ENCODE measurements at regions of chr1 and their contacts with region 1.

Region 1: DNA sequence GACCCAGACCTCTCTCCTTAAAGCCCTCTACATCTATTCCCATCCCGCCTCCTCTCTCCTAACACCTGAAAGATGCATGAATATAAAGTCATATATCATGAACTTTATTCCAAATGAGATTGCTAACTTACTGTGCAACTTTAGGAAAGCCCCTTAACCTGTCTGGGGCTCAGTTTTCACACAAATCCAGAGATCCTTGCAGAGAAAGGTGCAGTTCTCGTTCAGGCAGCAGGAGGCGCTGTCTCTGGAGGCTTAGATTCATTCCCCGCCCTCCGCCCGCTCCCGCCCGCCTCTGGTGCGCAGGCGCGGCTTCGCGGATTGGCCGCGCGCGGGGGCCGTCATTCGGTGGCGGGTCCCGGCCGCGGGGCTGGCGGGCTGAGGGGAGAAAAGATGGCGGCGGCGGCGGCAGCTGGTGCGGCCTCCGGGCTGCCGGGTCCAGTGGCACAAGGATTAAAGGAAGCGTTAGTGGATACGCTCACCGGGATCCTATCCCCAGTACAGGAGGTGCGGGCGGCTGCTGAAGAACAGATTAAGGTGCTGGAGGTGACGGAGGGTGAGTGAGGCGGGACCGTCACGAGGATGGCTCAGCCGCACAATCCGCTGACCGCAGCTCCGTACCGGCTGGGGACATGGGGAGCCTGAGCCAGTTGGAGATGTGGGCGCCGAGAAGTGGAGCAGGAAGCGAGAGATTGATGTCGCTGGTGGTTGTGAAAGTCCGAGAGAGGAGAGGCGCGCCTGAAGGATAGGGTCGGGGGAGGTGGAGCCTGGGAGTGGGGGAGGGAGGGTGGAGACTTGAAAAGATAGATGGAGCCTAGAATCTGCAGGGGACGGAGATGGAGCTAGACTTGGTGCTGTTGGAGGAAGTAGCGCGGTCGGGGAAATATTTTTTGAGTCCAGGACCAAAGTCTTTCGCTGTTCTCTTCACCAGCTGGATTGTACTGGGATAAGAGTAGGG is at the start of gene IPO9:
- DNase-seq: peak; percentile 89 to 91 (median 90)
- H3K4me3 ChIP-seq: peak within 1 kb of the TSS; percentile 72 to 100 (median 92)
- H3K4me3 Mint-ChIP-seq: peak within 1 kb of the TSS; percentile 97 to 98
- H3K27ac ChIP-seq: peak within 1 kb of the TSS; percentile 90 to 97
- H3K27ac Mint-ChIP-seq: peak within 1 kb of the TSS; percentile 96 to 99 (median 98)
- H3K4me1 ChIP-seq: peaks cover 12 to 20% of the 10 kb centered on the region in 2 donors
- H3K4me1 Mint-ChIP-seq: peaks cover 37% of the 10 kb centered on the region
- H3K27me3 ChIP-seq: no peaks in the 10 kb centered on the region
- H3K27me3 Mint-ChIP-seq: no peaks in the 10 kb centered on the region
- CTCF ChIP-seq: peak; percentile 95
- polyA plus RNA-seq, gene IPO9: 11.3 to 12.6 (median 12.0) TPM

Region 2: GRCh38 chr1:201955009-201955728 is 126.1 kb after region 1 on chr1 and contains the start of gene TIMM17A:
- intact Hi-C with region 1: loop called in 1 of 2 experiments (anchors 5 kb)
- DNase-seq: peak; percentile 97 to 99 (median 98)
- H3K4me3 ChIP-seq: peak within 1 kb of the TSS; percentile 68 to 93 (median 73)
- H3K4me3 Mint-ChIP-seq: peak within 1 kb of the TSS; percentile 94 to 99
- H3K27ac ChIP-seq: peak within 1 kb of the TSS; percentile 73 to 97
- H3K27ac Mint-ChIP-seq: peak within 1 kb of the TSS; percentile 97 to 99 (median 98)
- H3K4me1 ChIP-seq: peaks cover 11 to 14% of the 10 kb centered on the region in 2 donors
- H3K4me1 Mint-ChIP-seq: peaks cover 15% of the 10 kb centered on the region
- H3K27me3 ChIP-seq: no peaks in the 10 kb centered on the region
- H3K27me3 Mint-ChIP-seq: peaks cover 0 to 2% (median 0%) of the 10 kb centered on the region in 3 donors
- CTCF ChIP-seq: no peak
- polyA plus RNA-seq, gene TIMM17A: 27.4 to 50.3 (median 45.4) TPM